AG04450 (cell line): ENCODE measurements at regions of chr2 and their contacts with region 1.

Region 1: DNA sequence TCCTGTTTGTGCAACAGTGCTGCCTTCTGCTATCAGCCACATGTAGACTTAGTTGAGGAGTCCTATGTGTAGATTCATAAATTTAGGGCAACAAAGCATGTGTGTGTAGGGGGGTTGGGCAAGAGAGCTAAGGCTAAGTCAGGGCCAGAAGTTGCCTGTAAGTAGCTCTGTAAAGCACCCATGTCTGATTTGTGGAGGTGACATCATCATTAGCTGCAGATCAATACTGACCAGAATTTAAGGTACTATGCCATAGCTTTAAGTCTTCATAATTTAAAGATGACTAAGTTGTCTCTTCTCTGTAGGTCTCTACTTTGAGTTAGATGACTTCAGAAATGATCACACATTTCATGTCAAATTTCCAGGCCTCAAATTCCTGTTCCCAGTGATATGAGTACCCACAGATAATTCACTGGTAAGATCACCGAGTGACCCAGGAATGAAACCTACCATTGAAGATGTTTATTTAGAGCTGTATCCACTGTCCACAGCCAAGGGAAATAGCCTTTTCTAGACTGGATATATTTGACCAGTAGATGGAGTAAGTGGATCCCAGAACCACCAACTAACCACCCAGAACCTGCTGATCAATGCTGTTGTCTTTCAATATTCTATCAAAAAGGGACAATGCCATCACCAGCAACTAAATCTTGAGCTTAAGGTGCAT is 239.0 kb downstream of the SLC8A1 start:
- DNase-seq: no peak
- H3K4me3 ChIP-seq: no peak overlapping the region
- H3K27ac ChIP-seq: no peak overlapping the region
- H3K27me3 ChIP-seq: no peaks in the 10 kb centered on the region
- CTCF ChIP-seq: peak; percentile 54

Region 2: GRCh38 chr2:40202798-40203400 is 10.0 kb before region 1 on chr2:
- CTCF ChIA-PET with region 1: interaction called, 13 read pairs
- POLR2A ChIA-PET with region 1: interaction called, 4 read pairs
- DNase-seq: no peak
- H3K4me3 ChIP-seq: no peak overlapping the region
- H3K27ac ChIP-seq: no peak overlapping the region
- H3K27me3 ChIP-seq: no peaks in the 10 kb centered on the region
- CTCF ChIP-seq: no peak

Region 3: GRCh38 chr2:40230707-40231432 is 17.9 kb after region 1 on chr2:
- CTCF ChIA-PET with region 1: interaction called, 11 read pairs
- POLR2A ChIA-PET with region 1: interaction called, 3 read pairs
- DNase-seq: no peak
- H3K4me3 ChIP-seq: no peak overlapping the region
- H3K27ac ChIP-seq: no peak overlapping the region
- H3K27me3 ChIP-seq: no peaks in the 10 kb centered on the region
- CTCF ChIP-seq: no peak